BJ (cell line): ENCODE measurements at regions of chr4 and their contacts with region 1.

Region 1: GRCh38 chr4:82268050-82268825 is 105.6 kb downstream of the HNRNPD start:
- DNase-seq: peak; percentile 2
- H3K4me3 ChIP-seq: no peak overlapping the region
- H3K27me3 ChIP-seq: 0 out of 2 replicates have a peak, but pooled peaks cover 2% of the 10 kb centered on the region
- CTCF ChIP-seq: peak; percentile 80

Region 2: GRCh38 chr4:82256718-82257117 is 11.5 kb before region 1 on chr4:
- CTCF ChIA-PET with region 1: interaction called, 10 read pairs
- POLR2A ChIA-PET with region 1: no interaction called
- DNase-seq: no peak
- H3K4me3 ChIP-seq: no peak overlapping the region
- H3K27me3 ChIP-seq: no peaks in the 10 kb centered on the region
- CTCF ChIP-seq: no peak